ENCODE measurements at regions of chr6 and their contacts with region 1.

Region 1: GRCh38 chr6:144394210-144394609 is 109.1 kb downstream of the UTRN start:
- DNase-seq: no peak
- ATAC-seq: no peak

Region 2: GRCh38 chr6:145368075-145368474 is 973.9 kb after region 1 on chr6:
- intact Hi-C with region 1: loop called (anchors 5 kb)
- DNase-seq: no peak
- ATAC-seq: no peak